GM12878 (cell line): ENCODE measurements at regions of chr15 and their contacts with region 1.

Region 1: DNA sequence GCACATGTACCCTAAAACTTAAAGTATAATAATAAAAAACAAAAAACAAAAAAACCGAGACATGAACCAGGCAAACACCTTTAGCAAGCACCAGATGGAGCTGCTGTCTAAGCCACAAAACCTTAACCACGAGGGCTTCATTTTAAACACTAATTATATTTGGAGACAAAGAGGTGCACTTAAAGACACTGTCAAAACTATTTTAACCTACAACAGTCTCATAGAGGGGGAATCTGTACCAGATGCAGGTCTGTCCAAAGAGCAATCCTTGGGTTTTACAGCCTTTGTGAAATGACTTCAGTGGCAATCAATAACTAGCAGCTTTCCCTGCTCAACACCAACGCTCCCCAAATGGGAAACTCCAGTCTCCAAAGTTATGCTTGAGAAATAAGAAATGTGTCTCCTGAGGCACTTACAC is 115.7 kb upstream of the TSPAN3 start:
- DNase-seq: peak; percentile 39
- ATAC-seq: peak; percentile 32
- H3K4me3 ChIP-seq: no peak overlapping the region
- H3K27ac ChIP-seq: peak overlapping the region; percentile 59
- H3K4me1 ChIP-seq: peaks cover 61% of the 10 kb centered on the region
- H3K27me3 ChIP-seq: no peaks in the 10 kb centered on the region
- CTCF ChIP-seq: peak; percentile 64 to 73 (median 67)
- EP300 ChIP-seq: no peak
- POLR2A ChIP-seq: no peak
- RAD21 ChIP-seq: peak; percentile 95

Region 2: GRCh38 chr15:76393614-76394013 is 793.0 kb before region 1 on chr15:
- CTCF ChIA-PET with region 1: no interaction called
- POLR2A ChIA-PET with region 1: no interaction called
- RAD21 ChIA-PET with region 1: no interaction called
- SMC1A ChIA-PET with region 1: no interaction called
- in situ Hi-C with region 1: no loop called
- intact Hi-C with region 1: no loop called
- DNase-seq: no peak
- ATAC-seq: no peak
- H3K4me3 ChIP-seq: no peak overlapping the region
- H3K27ac ChIP-seq: no peak overlapping the region
- H3K4me1 ChIP-seq: no peaks in the 10 kb centered on the region
- H3K27me3 ChIP-seq: no peaks in the 10 kb centered on the region
- CTCF ChIP-seq: no peak
- EP300 ChIP-seq: no peak
- POLR2A ChIP-seq: no peak
- RAD21 ChIP-seq: no peak

Region 3: GRCh38 chr15:76533060-76533822 is 653.4 kb before region 1 on chr15:
- CTCF ChIA-PET with region 1: no interaction called
- POLR2A ChIA-PET with region 1: no interaction called
- RAD21 ChIA-PET with region 1: no interaction called
- SMC1A ChIA-PET with region 1: no interaction called
- in situ Hi-C with region 1: no loop called
- intact Hi-C with region 1: no loop called
- DNase-seq: no peak
- ATAC-seq: no peak
- H3K4me3 ChIP-seq: no peak overlapping the region
- H3K27ac ChIP-seq: no peak overlapping the region
- H3K4me1 ChIP-seq: no peaks in the 10 kb centered on the region
- H3K27me3 ChIP-seq: no peaks in the 10 kb centered on the region
- CTCF ChIP-seq: no peak
- EP300 ChIP-seq: no peak
- POLR2A ChIP-seq: no peak
- RAD21 ChIP-seq: no peak

Region 4: DNA sequence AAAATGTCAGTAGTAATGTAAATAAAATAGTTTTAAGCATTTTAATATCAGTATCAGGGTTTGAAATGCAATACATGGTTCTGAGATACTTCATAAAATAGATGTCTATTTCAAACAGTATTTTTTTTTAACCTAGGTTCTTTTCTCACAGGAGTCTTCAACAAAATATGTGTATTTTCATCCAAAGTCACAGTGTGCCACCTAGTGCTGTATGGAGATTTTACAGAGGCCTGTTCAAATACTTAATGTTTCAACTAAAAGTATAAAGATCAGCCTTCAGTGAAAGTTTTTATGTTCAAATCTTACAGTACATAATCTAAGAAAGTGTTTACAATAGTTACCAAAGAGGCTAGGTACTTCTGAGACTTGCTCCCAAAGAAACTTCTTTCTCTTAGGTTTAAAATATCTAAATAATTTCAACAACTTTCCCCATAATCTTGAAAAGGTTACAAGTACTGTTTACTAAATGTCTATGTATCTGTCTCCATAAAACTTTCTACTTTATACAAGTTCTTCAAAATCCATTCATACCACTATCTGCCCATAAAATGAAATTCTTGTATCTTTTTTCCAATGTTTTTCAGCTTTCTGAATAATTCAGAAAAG is 319.8 kb before region 1 on chr15:
- CTCF ChIA-PET with region 1: no interaction called
- POLR2A ChIA-PET with region 1: no interaction called
- RAD21 ChIA-PET with region 1: no interaction called
- SMC1A ChIA-PET with region 1: no interaction called
- in situ Hi-C with region 1: no loop called
- intact Hi-C with region 1: no loop called
- DNase-seq: no peak
- ATAC-seq: peak; percentile 53; the same call in 2 of the 3 replicates
- H3K4me3 ChIP-seq: no peak overlapping the region
- H3K27ac ChIP-seq: no peak overlapping the region
- H3K4me1 ChIP-seq: peaks cover 5% of the 10 kb centered on the region; the same call in 1 of the 2 replicates
- H3K27me3 ChIP-seq: no peaks in the 10 kb centered on the region
- CTCF ChIP-seq: peak; percentile 43 to 51 (median 47); a peak in 5 of 6 replicates
- EP300 ChIP-seq: no peak
- POLR2A ChIP-seq: no peak
- RAD21 ChIP-seq: peak; percentile 82

Region 5: GRCh38 chr15:76987926-76988860 is 198.4 kb before region 1 on chr15:
- CTCF ChIA-PET with region 1: interaction called, 4 read pairs
- POLR2A ChIA-PET with region 1: interaction called, 3 read pairs
- RAD21 ChIA-PET with region 1: interaction called, 12 read pairs
- SMC1A ChIA-PET with region 1: interaction called, 3 read pairs
- in situ Hi-C with region 1: no loop called
- intact Hi-C with region 1: loop called (anchors 10 kb)
- DNase-seq: peak; percentile 90
- ATAC-seq: peak; percentile 91
- H3K4me3 ChIP-seq: peak overlapping the region; percentile 40; the same call in 1 of the 2 replicates
- H3K27ac ChIP-seq: peak overlapping the region; percentile 89
- H3K4me1 ChIP-seq: peaks cover 41% of the 10 kb centered on the region
- H3K27me3 ChIP-seq: no peaks in the 10 kb centered on the region
- CTCF ChIP-seq: no peak
- EP300 ChIP-seq: peak; percentile 79 to 94; a peak in 3 of 4 replicates
- POLR2A ChIP-seq: peak; percentile 53
- RAD21 ChIP-seq: peak; percentile 25; the same call in 1 of the 2 replicates

Region 6: GRCh38 chr15:77118882-77119321 is 67.7 kb before region 1 on chr15:
- CTCF ChIA-PET with region 1: interaction called, 361 read pairs
- POLR2A ChIA-PET with region 1: interaction called, 7 read pairs
- RAD21 ChIA-PET with region 1: interaction called, 272 read pairs
- SMC1A ChIA-PET with region 1: interaction called, 365 read pairs
- in situ Hi-C with region 1: no loop called
- intact Hi-C with region 1: loop called (anchors 1 kb)
- DNase-seq: peak; percentile 32
- ATAC-seq: peak; percentile 81
- H3K4me3 ChIP-seq: no peak overlapping the region
- H3K27ac ChIP-seq: no peak overlapping the region
- H3K4me1 ChIP-seq: peaks cover 12% of the 10 kb centered on the region; the same call in 1 of the 2 replicates
- H3K27me3 ChIP-seq: no peaks in the 10 kb centered on the region
- CTCF ChIP-seq: peak; percentile 65 to 76 (median 71)
- EP300 ChIP-seq: no peak
- POLR2A ChIP-seq: no peak
- RAD21 ChIP-seq: peak; percentile 86

Region 7: GRCh38 chr15:77285057-77285997 is 98.7 kb after region 1 on chr15:
- CTCF ChIA-PET with region 1: interaction called, 3 read pairs
- POLR2A ChIA-PET with region 1: no interaction called
- RAD21 ChIA-PET with region 1: interaction called, 3 read pairs
- SMC1A ChIA-PET with region 1: interaction called, 11 read pairs
- in situ Hi-C with region 1: no loop called
- intact Hi-C with region 1: no loop called
- DNase-seq: no peak
- ATAC-seq: no peak
- H3K4me3 ChIP-seq: no peak overlapping the region
- H3K27ac ChIP-seq: no peak overlapping the region
- H3K4me1 ChIP-seq: no peaks in the 10 kb centered on the region
- H3K27me3 ChIP-seq: no peaks in the 10 kb centered on the region
- CTCF ChIP-seq: no peak
- EP300 ChIP-seq: no peak
- POLR2A ChIP-seq: no peak
- RAD21 ChIP-seq: no peak

Region 8: GRCh38 chr15:77419836-77420609 is 233.4 kb after region 1 on chr15 and contains the start of gene PEAK1:
- CTCF ChIA-PET with region 1: interaction called, 50 read pairs
- POLR2A ChIA-PET with region 1: interaction called, 8 read pairs
- RAD21 ChIA-PET with region 1: interaction called, 55 read pairs
- SMC1A ChIA-PET with region 1: interaction called, 107 read pairs
- in situ Hi-C with region 1: no loop called
- intact Hi-C with region 1: loop called (anchors 2 kb)
- DNase-seq: peak; percentile 86
- ATAC-seq: peak; percentile 93
- H3K4me3 ChIP-seq: peak within 1 kb of the TSS; percentile 84
- H3K27ac ChIP-seq: peak within 1 kb of the TSS; percentile 98
- H3K4me1 ChIP-seq: no peaks in the 10 kb centered on the region; the same call in 1 of the 2 replicates
- H3K27me3 ChIP-seq: no peaks in the 10 kb centered on the region
- CTCF ChIP-seq: no peak
- EP300 ChIP-seq: no peak
- POLR2A ChIP-seq: peak; percentile 91
- RAD21 ChIP-seq: no peak
- polyA plus RNA-seq, gene PEAK1: 0.62 to 1.1 TPM

Region 9: GRCh38 chr15:77440378-77440999 is 253.9 kb after region 1 on chr15:
- CTCF ChIA-PET with region 1: interaction called, 12 read pairs
- POLR2A ChIA-PET with region 1: interaction called, 3 read pairs
- RAD21 ChIA-PET with region 1: interaction called, 10 read pairs
- SMC1A ChIA-PET with region 1: interaction called, 6 read pairs
- in situ Hi-C with region 1: no loop called
- intact Hi-C with region 1: no loop called
- DNase-seq: peak; percentile 48
- ATAC-seq: peak; percentile 96
- H3K4me3 ChIP-seq: no peak overlapping the region
- H3K27ac ChIP-seq: no peak overlapping the region
- H3K4me1 ChIP-seq: peaks cover 25% of the 10 kb centered on the region
- H3K27me3 ChIP-seq: no peaks in the 10 kb centered on the region
- CTCF ChIP-seq: no peak
- EP300 ChIP-seq: peak; percentile 63 to 73
- POLR2A ChIP-seq: no peak
- RAD21 ChIP-seq: no peak

Region 10: GRCh38 chr15:77538027-77538451 is 351.4 kb after region 1 on chr15:
- CTCF ChIA-PET with region 1: interaction called, 455 read pairs
- POLR2A ChIA-PET with region 1: interaction called, 8 read pairs
- RAD21 ChIA-PET with region 1: interaction called, 286 read pairs
- SMC1A ChIA-PET with region 1: interaction called, 352 read pairs
- in situ Hi-C with region 1: loop called (anchors 5 kb)
- intact Hi-C with region 1: loop called (anchors 1 kb)
- DNase-seq: peak; percentile 72
- ATAC-seq: peak; percentile 82
- H3K4me3 ChIP-seq: peak overlapping the region; percentile 28; the same call in 1 of the 2 replicates
- H3K27ac ChIP-seq: peak overlapping the region; percentile 91
- H3K4me1 ChIP-seq: peaks cover 40% of the 10 kb centered on the region
- H3K27me3 ChIP-seq: no peaks in the 10 kb centered on the region
- CTCF ChIP-seq: no peak
- EP300 ChIP-seq: peak; percentile 53 to 56; a peak in 2 of 4 replicates
- POLR2A ChIP-seq: no peak
- RAD21 ChIP-seq: no peak

Region 11: DNA sequence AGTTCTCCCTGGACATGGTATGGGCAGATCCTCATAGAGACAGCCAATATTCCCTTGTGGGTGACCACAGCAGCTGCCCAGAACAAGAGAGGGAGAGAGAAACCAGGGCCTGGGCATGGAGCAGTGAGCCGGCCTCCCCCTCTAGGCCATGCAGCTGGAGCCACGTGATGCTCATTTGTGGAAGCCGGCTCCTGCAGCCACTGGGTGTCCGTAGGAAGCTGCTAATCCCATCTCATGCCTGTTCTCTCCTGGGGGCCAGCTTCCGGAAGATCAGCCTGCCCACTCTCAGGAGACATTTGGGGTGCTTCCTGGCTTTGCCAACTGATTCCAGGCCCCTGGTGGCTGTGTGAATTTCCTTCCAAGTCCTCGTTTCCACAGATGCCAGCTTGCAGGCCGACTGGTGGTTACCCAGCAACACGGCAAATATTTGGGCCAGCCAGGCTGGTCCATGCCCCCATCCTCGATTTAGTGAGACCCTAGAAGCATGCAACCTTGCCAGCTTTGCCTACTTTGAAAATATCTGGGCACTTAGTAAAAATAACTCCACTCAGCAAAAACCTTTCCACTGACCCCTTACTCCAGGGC is 390.9 kb after region 1 on chr15:
- CTCF ChIA-PET with region 1: no interaction called
- POLR2A ChIA-PET with region 1: no interaction called
- RAD21 ChIA-PET with region 1: no interaction called
- SMC1A ChIA-PET with region 1: no interaction called
- in situ Hi-C with region 1: no loop called
- intact Hi-C with region 1: no loop called
- DNase-seq: no peak
- ATAC-seq: no peak
- H3K4me3 ChIP-seq: no peak overlapping the region
- H3K27ac ChIP-seq: no peak overlapping the region
- H3K4me1 ChIP-seq: no peaks in the 10 kb centered on the region
- H3K27me3 ChIP-seq: peaks cover 0 to 2% of the 10 kb centered on the region in 2 experiments; a peak in 3 of 4 replicates
- CTCF ChIP-seq: no peak
- EP300 ChIP-seq: no peak
- POLR2A ChIP-seq: no peak
- RAD21 ChIP-seq: no peak